ENCODE measurements at regions of chr7 and their contacts with region 1.

Region 1: GRCh38 chr7:5557920-5558401 is 134.3 kb upstream of the TNRC18 start:
- DNase-seq: peak; percentile 23
- H3K4me3 Mint-ChIP-seq: peak overlapping the region; percentile 62
- H3K27ac Mint-ChIP-seq: peak overlapping the region; percentile 73
- H3K4me1 Mint-ChIP-seq: peaks cover 49% of the 10 kb centered on the region
- H3K27me3 Mint-ChIP-seq: peaks cover 14% of the 10 kb centered on the region

Region 2: GRCh38 chr7:5519515-5519928 is 38.4 kb before region 1 on chr7:
- CTCF ChIA-PET with region 1: interaction called, 33 read pairs
- POLR2A ChIA-PET with region 1: interaction called, 4 read pairs
- DNase-seq: no peak
- H3K4me3 Mint-ChIP-seq: no peak overlapping the region
- H3K27ac Mint-ChIP-seq: no peak overlapping the region
- H3K4me1 Mint-ChIP-seq: peaks cover 4% of the 10 kb centered on the region
- H3K27me3 Mint-ChIP-seq: no peaks in the 10 kb centered on the region

Region 3: DNA sequence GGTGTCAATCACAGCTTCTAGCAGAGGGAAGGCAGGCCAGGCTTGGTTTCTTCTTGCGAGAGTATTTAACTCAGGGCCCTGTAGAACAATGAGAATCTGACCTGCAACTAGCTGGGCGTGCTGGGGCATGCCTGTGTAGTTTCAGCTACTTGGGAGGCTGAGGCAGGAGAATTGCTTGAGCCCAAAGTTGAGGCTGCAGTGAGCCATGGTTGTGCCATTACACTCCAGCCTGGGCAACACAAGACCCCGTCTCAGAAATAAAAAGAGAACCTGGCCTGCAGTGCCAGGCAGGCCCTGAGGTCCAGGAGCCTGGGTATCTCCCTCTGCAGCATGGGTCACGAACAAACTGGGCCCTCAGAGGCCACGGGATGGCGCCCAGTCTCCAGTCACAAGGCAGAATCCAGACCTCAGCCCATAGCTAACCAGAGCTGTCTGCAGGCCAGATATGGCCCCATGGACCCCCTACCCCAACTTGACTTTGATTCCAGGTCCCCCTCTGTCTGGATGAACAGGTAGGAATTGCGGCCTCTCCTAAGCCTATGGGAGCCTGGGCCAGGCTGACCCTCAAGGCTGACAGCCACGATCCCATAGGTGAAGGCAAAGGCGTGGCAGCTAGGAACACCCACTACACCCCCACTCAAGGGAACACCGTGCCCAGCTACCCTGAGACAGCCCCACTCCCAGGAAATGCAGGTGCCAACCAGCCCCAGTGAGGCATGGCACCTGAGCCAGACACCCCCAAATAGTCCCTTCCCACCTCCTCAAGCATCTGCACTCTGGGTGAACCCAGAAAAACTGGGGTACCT is 31.7 kb before region 1 on chr7:
- CTCF ChIA-PET with region 1: interaction called, 33 read pairs
- POLR2A ChIA-PET with region 1: interaction called, 4 read pairs
- DNase-seq: peak; percentile 46
- H3K4me3 Mint-ChIP-seq: peak overlapping the region; percentile 99
- H3K27ac Mint-ChIP-seq: peak overlapping the region; percentile 96
- H3K4me1 Mint-ChIP-seq: peaks cover 30% of the 10 kb centered on the region
- H3K27me3 Mint-ChIP-seq: no peaks in the 10 kb centered on the region

Region 4: DNA sequence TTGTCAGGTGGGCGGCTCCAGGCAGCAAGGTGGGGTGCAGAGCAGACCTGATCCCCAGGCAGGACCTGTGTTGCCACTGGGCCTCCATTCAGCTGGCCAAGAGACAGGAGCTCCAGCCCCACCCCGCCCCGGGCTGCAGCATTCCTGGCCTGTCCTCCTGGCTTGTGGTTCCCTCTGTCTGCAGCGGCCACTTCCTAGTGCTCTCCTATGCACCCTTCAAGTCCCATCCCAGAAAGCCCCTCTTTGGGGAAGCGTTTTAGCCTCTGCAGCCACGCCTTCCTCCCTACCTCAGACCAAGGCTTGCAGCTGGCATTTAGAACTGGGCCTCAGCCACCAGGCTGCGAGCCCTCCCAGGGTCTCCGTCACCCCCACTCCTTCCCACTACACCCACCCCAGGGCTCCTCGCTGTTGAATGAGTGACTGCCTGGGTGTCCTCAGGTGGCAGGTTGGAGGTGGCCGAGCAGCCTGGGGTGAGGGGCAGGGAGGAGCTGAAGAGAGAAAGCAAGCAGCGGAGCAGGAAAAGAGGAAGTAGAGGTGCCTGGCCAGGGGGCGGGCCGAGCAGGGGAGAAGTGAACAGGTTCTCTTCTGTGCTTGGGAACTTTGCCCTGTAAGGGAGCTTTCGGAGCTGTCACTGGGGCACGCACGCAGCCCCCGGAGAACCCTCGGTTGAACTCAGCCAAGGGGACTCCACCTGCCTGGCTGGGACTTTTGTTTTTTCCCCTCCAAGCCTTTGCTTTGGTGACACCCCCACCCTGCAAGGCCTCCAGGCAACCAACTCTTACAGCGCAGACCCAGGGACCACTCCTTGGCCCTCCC is 25.2 kb before region 1 on chr7:
- CTCF ChIA-PET with region 1: interaction called, 10 read pairs
- POLR2A ChIA-PET with region 1: interaction called, 3 read pairs
- DNase-seq: peak; percentile 66
- H3K4me3 Mint-ChIP-seq: peak overlapping the region; percentile 99
- H3K27ac Mint-ChIP-seq: peak overlapping the region; percentile 97
- H3K4me1 Mint-ChIP-seq: peaks cover 20% of the 10 kb centered on the region
- H3K27me3 Mint-ChIP-seq: peaks cover 3% of the 10 kb centered on the region

Measured in activated CD4-positive, alpha-beta memory T cell treated with anti-CD3 and anti-CD28 coated beads, Interleukin-2, amount 10 ng/mL, durations not matched to agents 7 days and 5 days (primary cell).